PC-3 (cell line): ENCODE measurements at regions of chr3 and their contacts with region 1.

Region 1: GRCh38 chr3:50227390-50228183 is 8.4 kb upstream of the GNAI2 start:
- DNase-seq: peak; percentile 98
- ATAC-seq: peak; percentile 85
- H3K4me3 ChIP-seq: peak overlapping the region; percentile 74
- H3K27ac ChIP-seq: peak overlapping the region; percentile 57
- H3K4me1 ChIP-seq: peaks cover 10% of the 10 kb centered on the region; the same call in 1 of the 2 replicates
- H3K27me3 ChIP-seq: no peaks in the 10 kb centered on the region
- CTCF ChIP-seq: peak; percentile 77

Region 2: DNA sequence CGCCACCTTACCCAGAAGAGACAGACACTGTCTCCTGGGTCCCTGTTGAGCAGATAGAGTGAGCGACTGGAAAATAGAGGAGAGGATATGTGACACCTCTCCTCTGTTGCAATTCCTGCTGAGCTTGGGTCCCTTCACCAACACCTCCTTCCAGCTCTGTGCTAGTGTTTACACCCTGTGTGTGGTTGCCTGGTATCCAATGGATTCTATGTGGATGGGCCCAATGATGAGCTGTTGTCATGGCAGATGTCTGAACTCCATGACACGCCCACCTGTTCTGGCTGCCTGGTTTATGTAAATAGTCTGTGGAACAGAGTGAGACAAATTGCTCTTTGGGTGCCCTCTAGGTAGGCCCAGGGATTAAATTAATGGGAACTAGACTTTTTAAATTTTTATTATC is 115.1 kb before region 1 on chr3:
- CTCF ChIA-PET with region 1: no interaction called
- POLR2A ChIA-PET with region 1: interaction called, 18 read pairs
- intact Hi-C with region 1: no loop called
- DNase-seq: no peak
- ATAC-seq: peak; percentile 50
- H3K4me3 ChIP-seq: no peak overlapping the region
- H3K27ac ChIP-seq: no peak overlapping the region
- H3K4me1 ChIP-seq: no peaks in the 10 kb centered on the region
- H3K27me3 ChIP-seq: no peaks in the 10 kb centered on the region
- CTCF ChIP-seq: no peak

Region 3: DNA sequence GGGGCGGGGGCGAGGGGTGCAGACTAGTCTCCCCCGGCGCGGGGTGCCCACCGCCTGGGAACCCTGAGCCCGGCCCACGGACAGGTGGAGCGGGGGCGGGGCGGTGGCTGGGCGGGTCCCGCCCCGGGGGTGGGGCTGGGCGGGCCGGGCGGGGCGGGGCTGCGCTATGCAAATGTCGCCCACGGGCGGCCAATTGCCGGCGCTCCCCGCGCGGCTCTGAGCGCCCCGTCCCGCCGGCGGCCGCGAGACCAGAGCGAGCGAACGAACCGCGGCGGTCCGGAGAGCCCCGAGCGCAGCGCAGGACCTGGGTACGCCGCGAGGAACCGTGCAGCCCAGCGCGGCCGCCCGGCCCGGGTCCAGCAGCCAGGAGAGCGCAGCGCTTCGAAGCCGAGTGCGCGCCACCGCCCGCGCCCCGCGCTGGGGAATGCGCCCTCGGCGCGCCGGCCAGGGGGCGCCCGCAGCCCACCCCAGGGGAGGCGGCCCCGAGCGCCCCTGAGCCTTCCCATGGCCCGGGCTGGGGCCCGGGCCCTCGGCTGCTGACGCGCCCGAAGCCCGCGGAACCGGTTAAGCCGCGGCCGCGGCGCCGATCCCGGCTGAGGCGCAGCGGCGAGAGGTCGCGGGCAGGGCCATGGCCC is 72.6 kb before region 1 on chr3 and contains the start of gene SEMA3F:
- CTCF ChIA-PET with region 1: no interaction called
- POLR2A ChIA-PET with region 1: no interaction called
- intact Hi-C with region 1: loop called (anchors 5 kb)
- DNase-seq: peak; percentile 85
- ATAC-seq: peak; percentile 71
- H3K4me3 ChIP-seq: peak within 1 kb of the TSS; percentile 81
- H3K27ac ChIP-seq: no peak within 1 kb of the TSS
- H3K4me1 ChIP-seq: peaks cover 37% of the 10 kb centered on the region
- H3K27me3 ChIP-seq: no peaks in the 10 kb centered on the region
- CTCF ChIP-seq: no peak
- total RNA-seq, gene SEMA3F: 47.3 and 50.5 TPM in 2 replicates

Region 4: GRCh38 chr3:50192689-50193141 is 34.9 kb before region 1 on chr3:
- CTCF ChIA-PET with region 1: interaction called, 22 read pairs
- POLR2A ChIA-PET with region 1: no interaction called
- intact Hi-C with region 1: loop called (anchors 1 kb)
- DNase-seq: peak; percentile 85
- ATAC-seq: peak; percentile 20
- H3K4me3 ChIP-seq: no peak overlapping the region
- H3K27ac ChIP-seq: no peak overlapping the region
- H3K4me1 ChIP-seq: no peaks in the 10 kb centered on the region; the same call in 1 of the 2 replicates
- H3K27me3 ChIP-seq: no peaks in the 10 kb centered on the region
- CTCF ChIP-seq: peak; percentile 96

Region 5: GRCh38 chr3:50245831-50246516 is 18.4 kb after region 1 on chr3:
- CTCF ChIA-PET with region 1: interaction called, 15 read pairs
- POLR2A ChIA-PET with region 1: no interaction called
- intact Hi-C with region 1: loop called (anchors 1 kb)
- DNase-seq: peak; percentile 89
- ATAC-seq: peak; percentile 74
- H3K4me3 ChIP-seq: peak overlapping the region; percentile 37; the same call in 1 of the 2 replicates
- H3K27ac ChIP-seq: peak overlapping the region; percentile 78
- H3K4me1 ChIP-seq: peaks cover 49% of the 10 kb centered on the region
- H3K27me3 ChIP-seq: no peaks in the 10 kb centered on the region
- CTCF ChIP-seq: peak; percentile 99

Region 6: GRCh38 chr3:50260027-50260941 is 32.7 kb after region 1 on chr3:
- CTCF ChIA-PET with region 1: interaction called, 8 read pairs
- POLR2A ChIA-PET with region 1: no interaction called
- intact Hi-C with region 1: loop called (anchors 2 kb)
- DNase-seq: peak; percentile 94
- ATAC-seq: peak; percentile 83
- H3K4me3 ChIP-seq: peak overlapping the region; percentile 63
- H3K27ac ChIP-seq: peak overlapping the region; percentile 58
- H3K4me1 ChIP-seq: peaks cover 21% of the 10 kb centered on the region
- H3K27me3 ChIP-seq: no peaks in the 10 kb centered on the region
- CTCF ChIP-seq: peak; percentile 87

Region 7: DNA sequence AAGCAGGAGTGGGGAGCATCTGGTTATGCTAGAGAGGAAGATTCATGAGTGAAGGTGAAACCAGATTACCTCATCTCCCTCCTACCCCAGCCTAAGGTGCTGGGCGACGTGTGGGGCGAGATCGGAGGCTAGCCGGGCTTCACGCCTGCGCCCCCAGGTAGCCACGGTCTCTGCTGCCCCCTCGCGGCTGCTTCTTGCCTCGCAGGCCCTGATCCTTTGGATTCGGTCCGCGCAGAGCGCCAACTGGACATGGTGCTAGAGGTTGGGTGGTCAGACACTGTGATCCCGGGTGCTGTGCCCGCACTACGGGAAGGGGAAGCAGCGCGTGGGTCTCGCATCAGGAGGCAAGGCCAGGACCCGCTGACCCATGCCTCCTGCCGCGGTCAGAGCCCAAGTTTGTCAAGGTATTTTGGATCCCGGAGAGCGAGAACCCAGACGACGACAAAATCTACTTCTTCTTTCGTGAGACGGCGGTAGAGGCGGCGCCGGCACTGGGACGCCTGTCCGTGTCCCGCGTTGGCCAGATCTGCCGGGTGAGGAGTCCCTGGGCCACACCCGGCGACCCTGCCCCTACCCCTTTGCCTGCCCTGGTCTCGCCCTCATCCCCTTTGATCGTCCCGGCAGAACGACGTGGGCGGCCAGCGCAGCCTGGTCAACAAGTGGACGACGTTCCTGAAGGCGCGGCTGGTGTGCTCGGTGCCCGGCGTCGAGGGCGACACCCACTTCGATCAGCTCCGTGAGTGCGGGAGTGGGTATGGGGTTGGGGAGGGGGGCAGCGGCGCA is 45.5 kb after region 1 on chr3:
- CTCF ChIA-PET with region 1: no interaction called
- POLR2A ChIA-PET with region 1: no interaction called
- intact Hi-C with region 1: loop called (anchors 1 kb)
- DNase-seq: peak; percentile 92
- ATAC-seq: peak; percentile 42
- H3K4me3 ChIP-seq: peak overlapping the region; percentile 59
- H3K27ac ChIP-seq: no peak overlapping the region
- H3K4me1 ChIP-seq: peaks cover 38% of the 10 kb centered on the region
- H3K27me3 ChIP-seq: no peaks in the 10 kb centered on the region
- CTCF ChIP-seq: peak; percentile 96

Region 8: DNA sequence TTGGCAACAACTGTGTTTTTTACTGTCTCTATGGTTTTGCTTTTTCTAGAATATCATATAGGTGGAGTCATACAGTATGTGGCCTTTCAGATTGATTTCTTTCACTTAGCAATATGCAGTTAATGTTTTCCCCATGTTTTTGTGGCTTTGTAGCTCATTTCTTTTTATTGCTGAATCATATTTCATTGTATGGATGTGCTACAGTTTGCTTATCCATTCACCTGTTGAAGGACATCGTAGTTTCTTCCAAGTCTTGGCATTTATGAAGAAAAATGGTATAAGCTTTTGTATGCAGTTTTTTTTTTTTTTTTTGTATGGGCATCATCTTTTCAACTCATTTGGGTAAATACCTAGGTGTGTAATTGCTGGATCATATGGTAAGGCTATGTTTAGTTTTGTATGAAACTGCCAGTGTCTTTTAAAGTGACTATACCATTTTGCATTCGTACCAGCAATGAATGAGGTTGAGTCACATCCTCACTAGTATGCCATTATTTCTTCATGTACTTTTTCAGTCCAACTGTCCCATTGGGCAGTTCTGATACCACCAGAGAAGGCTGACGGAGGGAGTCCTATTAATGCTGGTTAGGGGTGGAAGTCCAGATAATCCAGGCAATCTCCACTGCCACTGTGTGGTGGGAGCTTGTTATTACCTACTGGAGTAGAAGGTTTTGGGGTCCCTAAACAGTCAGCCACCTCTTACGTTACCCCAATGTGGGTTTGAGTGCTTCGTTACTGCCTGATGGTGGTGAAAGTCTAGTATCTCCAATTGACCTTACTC is 657.7 kb after region 1 on chr3:
- CTCF ChIA-PET with region 1: no interaction called
- POLR2A ChIA-PET with region 1: no interaction called
- intact Hi-C with region 1: no loop called
- DNase-seq: peak; percentile 39
- ATAC-seq: no peak
- H3K4me3 ChIP-seq: no peak overlapping the region
- H3K27ac ChIP-seq: no peak overlapping the region
- H3K4me1 ChIP-seq: no peaks in the 10 kb centered on the region
- H3K27me3 ChIP-seq: no peaks in the 10 kb centered on the region
- CTCF ChIP-seq: peak; percentile 51

Region 9: DNA sequence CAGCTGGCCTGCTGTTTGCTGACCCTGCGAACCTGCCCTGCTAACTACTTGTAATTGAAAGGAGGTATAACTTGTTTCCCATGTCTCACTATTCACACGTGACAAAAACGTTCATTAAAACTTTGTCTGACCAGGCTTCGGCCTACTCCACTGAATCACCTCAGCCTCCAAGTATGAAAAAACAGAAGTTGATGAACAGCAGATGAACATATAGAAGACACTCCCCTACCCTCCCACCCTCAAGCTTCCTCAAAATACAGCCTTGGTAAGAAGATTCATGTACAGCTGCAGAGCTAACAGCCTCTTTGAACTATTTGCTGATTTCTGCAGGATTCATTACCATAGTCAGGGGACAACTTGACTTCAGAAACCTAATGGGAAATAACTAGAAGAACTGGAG is 1174.1 kb after region 1 on chr3:
- CTCF ChIA-PET with region 1: no interaction called
- POLR2A ChIA-PET with region 1: no interaction called
- intact Hi-C with region 1: no loop called
- DNase-seq: no peak
- ATAC-seq: no peak
- H3K4me3 ChIP-seq: no peak overlapping the region
- H3K27ac ChIP-seq: no peak overlapping the region
- H3K4me1 ChIP-seq: no peaks in the 10 kb centered on the region
- H3K27me3 ChIP-seq: no peaks in the 10 kb centered on the region
- CTCF ChIP-seq: no peak